ENCODE measurements at regions of chr6 and their contacts with region 1.

Region 1: DNA sequence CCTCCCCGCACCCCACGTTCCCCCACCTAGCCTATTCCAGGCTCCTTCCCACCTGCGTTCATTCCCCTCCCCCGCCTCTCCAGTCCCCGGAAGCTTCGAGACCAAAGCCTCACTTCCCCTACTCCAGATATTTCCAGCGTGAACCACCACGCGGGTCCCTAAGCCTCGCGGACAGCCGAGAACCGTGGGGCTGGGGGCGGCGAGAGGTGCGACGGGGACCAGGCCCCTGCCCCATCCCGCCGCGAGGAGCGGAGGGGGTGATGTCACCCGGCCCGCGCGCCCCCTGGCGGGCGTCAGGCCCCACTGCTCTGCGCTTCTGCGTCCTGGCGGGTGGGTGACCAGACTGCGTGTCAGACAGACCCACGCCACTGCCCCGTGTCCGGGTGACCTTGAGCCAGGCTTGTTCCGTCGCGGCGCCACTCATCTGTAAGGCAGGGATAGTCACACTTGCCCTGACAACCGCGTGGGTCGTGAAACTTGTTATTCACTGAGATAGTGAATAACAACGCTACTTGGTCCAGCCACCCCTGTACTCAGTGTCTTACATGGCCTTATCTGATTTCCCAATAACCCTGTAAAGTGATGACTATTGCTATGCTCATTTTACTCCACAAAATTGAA is 9.0 kb upstream of the HSP90AB1 start:
- DNase-seq: peak; percentile 64 to 69
- ATAC-seq: peak; percentile 80 to 87
- H3K4me3 ChIP-seq: peak overlapping the region; percentile 62
- H3K27ac ChIP-seq: peak overlapping the region; percentile 94 to 96
- H3K4me1 ChIP-seq: peaks cover 39% of the 10 kb centered on the region
- CTCF ChIP-seq: peak; percentile 81
- EP300 ChIP-seq: no peak
- POLR2A ChIP-seq: peak; percentile 16; the same call in 1 of the 2 replicates
- RAD21 ChIP-seq: peak; percentile 21 to 52; a peak in 2 of 5 replicates

Region 2: GRCh38 chr6:44221291-44221960 is 16.5 kb before region 1 on chr6:
- CTCF ChIA-PET with region 1: interaction called, 111 read pairs
- POLR2A ChIA-PET with region 1: interaction called, 4 read pairs
- DNase-seq: peak; percentile 60 to 87
- ATAC-seq: peak; percentile 47 to 77
- H3K4me3 ChIP-seq: no peak overlapping the region
- H3K27ac ChIP-seq: peak overlapping the region; percentile 67 to 98; a peak in 5 of 6 replicates
- H3K4me1 ChIP-seq: peaks cover 68% of the 10 kb centered on the region
- CTCF ChIP-seq: peak; percentile 45; the same call in 2 of the 3 replicates
- EP300 ChIP-seq: no peak
- POLR2A ChIP-seq: no peak
- RAD21 ChIP-seq: peak; percentile 47 to 52; a peak in 4 of 5 replicates

Region 3: GRCh38 chr6:44251576-44252524 is 13.9 kb after region 1 on chr6:
- CTCF ChIA-PET with region 1: interaction called, 56 read pairs
- POLR2A ChIA-PET with region 1: interaction called, 27 read pairs
- DNase-seq: no peak
- ATAC-seq: no peak
- H3K4me3 ChIP-seq: 0 out of 3 replicates have a peak overlapping the region, but pooled peaks have one; percentile 12
- H3K27ac ChIP-seq: no peak overlapping the region
- H3K4me1 ChIP-seq: peaks cover 56% of the 10 kb centered on the region
- CTCF ChIP-seq: no peak
- EP300 ChIP-seq: no peak
- POLR2A ChIP-seq: no peak
- RAD21 ChIP-seq: no peak

Region 4: DNA sequence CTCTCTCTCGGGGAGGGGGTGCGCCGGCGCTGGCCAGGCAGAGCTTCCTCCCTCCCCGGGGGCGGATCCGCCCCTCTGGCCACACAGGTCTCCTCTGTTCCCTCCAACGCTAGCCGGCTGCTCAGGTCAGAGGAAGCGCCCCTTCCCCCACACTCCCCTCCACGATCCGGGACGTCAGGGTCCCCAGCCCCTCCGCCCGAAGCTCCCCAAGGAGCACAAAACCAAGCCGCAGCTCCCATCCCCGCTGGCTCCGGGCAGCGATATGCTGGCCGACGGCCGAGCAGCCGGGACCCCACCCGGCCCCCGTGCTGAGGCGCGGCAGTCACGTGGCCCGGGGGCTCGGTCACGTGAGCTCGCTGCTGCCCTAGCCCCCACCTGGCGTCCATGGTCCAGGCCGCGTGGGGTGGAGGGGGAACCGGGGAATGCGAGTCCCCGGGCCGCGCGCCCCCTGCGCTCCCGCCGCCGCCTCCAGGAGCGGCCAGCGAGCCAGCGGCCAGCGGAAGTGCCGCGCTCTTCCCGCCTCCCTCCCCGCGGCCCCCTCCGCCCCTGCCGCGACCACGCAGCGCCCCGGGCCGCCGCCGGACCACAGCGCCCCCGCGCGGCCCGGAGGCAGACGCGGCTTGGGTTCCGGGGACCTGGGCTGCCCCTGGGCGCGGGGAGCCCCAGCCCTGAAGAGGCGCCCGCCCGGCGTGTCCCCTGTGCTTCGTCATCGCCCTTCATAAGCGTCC is 19.3 kb after region 1 on chr6 and contains the start of gene SLC35B2:
- CTCF ChIA-PET with region 1: interaction called, 16 read pairs
- POLR2A ChIA-PET with region 1: no interaction called
- DNase-seq: peak; percentile 48 to 55
- ATAC-seq: peak; percentile 48 to 54
- H3K4me3 ChIP-seq: peak within 1 kb of the TSS; percentile 96
- H3K27ac ChIP-seq: peak within 1 kb of the TSS; percentile 93 to 99
- H3K4me1 ChIP-seq: peaks cover 26% of the 10 kb centered on the region
- CTCF ChIP-seq: peak; percentile 80
- EP300 ChIP-seq: no peak
- POLR2A ChIP-seq: peak; percentile 51
- RAD21 ChIP-seq: no peak
- polyA plus RNA-seq, gene SLC35B2: 44.5 and 61.4 TPM in 2 replicates